ENCODE measurements at regions of chr20 and their contacts with region 1.

Region 1: GRCh38 chr20:54649511-54649962 is 174.1 kb downstream of the DOK5 start:
- DNase-seq: peak in 3 of 4 donors; percentile 71 to 89 (median 76)
- ATAC-seq: peak; percentile 94
- H3K4me3 ChIP-seq: no peak overlapping the region
- H3K27ac ChIP-seq: peak overlapping the region in 1 of 2 donors; percentile 16
- H3K4me1 ChIP-seq: peaks cover 0 to 3% of the 10 kb centered on the region in 2 donors
- H3K27me3 ChIP-seq: no peaks in the 10 kb centered on the region
- CTCF ChIP-seq: peak; percentile 67 to 70

Region 2: GRCh38 chr20:54103067-54103761 is 546.3 kb before region 1 on chr20:
- intact Hi-C with region 1: loop called in 1 of 2 experiments (anchors 10 kb)
- DNase-seq: peak in 3 of 4 donors; percentile 56 to 91 (median 84)
- ATAC-seq: peak; percentile 85
- H3K4me3 ChIP-seq: no peak overlapping the region
- H3K27ac ChIP-seq: no peak overlapping the region
- H3K4me1 ChIP-seq: no peaks in the 10 kb centered on the region
- H3K27me3 ChIP-seq: no peaks in the 10 kb centered on the region
- CTCF ChIP-seq: peak; percentile 92 to 93

Region 3: DNA sequence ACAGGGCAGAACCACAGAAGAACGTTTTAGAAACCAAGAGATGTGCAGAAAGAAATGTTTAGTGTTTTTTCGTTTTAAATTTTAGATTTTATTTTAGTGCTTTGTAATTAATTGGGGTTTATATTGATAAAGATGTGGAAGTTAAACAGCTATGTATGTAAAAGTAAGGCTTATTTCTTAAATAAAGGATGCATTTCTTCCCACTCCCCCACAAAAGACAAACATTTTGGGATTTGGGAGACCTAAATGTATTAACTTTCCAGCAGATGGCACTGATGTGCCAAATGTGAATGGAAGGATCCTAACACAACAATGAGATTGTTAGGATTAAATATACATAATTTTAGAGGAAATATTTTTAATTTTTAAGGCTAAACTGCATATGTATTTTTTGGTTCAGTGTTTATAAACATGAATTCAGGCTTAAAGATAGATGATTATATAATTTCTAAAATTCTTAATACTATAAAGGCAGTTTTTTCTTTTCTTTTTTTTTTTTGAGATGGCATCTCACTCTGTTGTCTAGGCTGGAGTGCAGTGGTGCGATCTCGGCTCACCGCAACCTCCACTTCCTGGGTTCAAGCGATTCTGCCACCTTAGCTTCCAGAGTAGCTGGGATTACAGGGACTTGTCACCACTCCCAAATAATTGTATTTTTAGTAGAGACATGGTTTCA is 429.6 kb before region 1 on chr20:
- intact Hi-C with region 1: loop called in 1 of 2 experiments (anchors 5 kb)
- DNase-seq: peak in 2 of 4 donors; percentile 28 to 53
- ATAC-seq: peak; percentile 52
- H3K4me3 ChIP-seq: no peak overlapping the region
- H3K27ac ChIP-seq: no peak overlapping the region
- H3K4me1 ChIP-seq: peaks cover 0 to 8% of the 10 kb centered on the region in 2 donors
- H3K27me3 ChIP-seq: no peaks in the 10 kb centered on the region
- CTCF ChIP-seq: peak; percentile 29 to 36

Measured in left lung (tissue), 14 donors.